ENCODE measurements at regions of chr15 and their contacts with region 1.

Region 1: GRCh38 chr15:55775316-55775715 is 32.4 kb upstream of the PRTG start:
- DNase-seq: no peak
- ATAC-seq: no peak
- H3K4me3 ChIP-seq: no peak overlapping the region
- H3K4me3 Mint-ChIP-seq: no peak overlapping the region
- H3K27ac ChIP-seq: no peak overlapping the region
- H3K27ac Mint-ChIP-seq: no peak overlapping the region
- H3K4me1 ChIP-seq: no peaks in the 10 kb centered on the region
- H3K4me1 Mint-ChIP-seq: peaks cover 0 to 1% (median 0%) of the 10 kb centered on the region in 7 donors
- H3K27me3 ChIP-seq: no peaks in the 10 kb centered on the region
- H3K27me3 Mint-ChIP-seq: peaks cover 26 to 34% (median 30%) of the 10 kb centered on the region in 5 donors

Region 2: DNA sequence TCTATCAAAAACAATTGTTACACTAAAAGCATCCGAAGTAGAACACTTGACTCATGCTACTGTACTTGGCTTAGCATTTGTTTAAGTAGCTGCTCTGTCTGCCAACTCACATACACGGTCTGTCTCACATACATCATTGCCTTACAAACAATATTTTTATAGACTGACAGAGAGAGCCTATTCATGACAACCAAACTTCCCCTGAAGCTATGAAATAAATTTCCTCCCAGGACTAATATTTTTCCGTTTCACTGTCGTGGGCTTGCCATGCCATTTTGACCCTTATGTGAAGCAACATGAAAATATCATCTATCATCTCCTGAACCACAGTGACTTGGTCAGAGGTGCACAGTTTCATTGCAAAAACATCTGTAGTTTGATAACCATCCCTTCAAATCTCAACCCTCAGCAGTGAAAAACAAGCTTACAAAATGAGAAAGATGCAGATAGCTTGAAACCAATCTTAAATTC is 120.7 kb before region 1 on chr15:
- CTCF ChIA-PET with region 1: no interaction called
- POLR2A ChIA-PET with region 1: no interaction called
- intact Hi-C with region 1: loop called in 1 of 2 experiments (anchors 10 kb)
- DNase-seq: no peak
- ATAC-seq: no peak
- H3K4me3 ChIP-seq: no peak overlapping the region
- H3K4me3 Mint-ChIP-seq: no peak overlapping the region
- H3K27ac ChIP-seq: no peak overlapping the region
- H3K27ac Mint-ChIP-seq: no peak overlapping the region
- H3K4me1 ChIP-seq: no peaks in the 10 kb centered on the region
- H3K4me1 Mint-ChIP-seq: no peaks in the 10 kb centered on the region
- H3K27me3 ChIP-seq: no peaks in the 10 kb centered on the region
- H3K27me3 Mint-ChIP-seq: peaks cover 0 to 16% (median 0%) of the 10 kb centered on the region in 5 donors

Region 3: DNA sequence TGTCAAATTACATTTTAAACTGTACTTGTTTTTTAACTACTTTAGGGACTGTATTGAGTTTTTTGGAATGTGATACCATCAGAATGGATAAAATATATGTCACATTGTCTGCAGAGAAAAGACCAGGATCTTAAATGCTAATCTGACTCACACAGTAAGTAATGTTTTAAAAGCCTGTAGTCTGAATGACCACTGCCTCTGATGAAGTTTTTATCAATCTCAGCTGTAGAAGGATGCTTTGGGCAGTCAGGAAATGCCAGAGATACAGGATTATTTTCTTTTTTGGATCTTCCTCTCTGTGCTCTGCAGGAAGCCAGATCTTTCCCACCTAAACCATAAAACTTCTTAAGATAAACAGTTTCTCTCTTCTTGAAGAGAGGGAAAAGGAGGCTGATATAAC is 40.7 kb after region 1 on chr15:
- CTCF ChIA-PET with region 1: no interaction called
- POLR2A ChIA-PET with region 1: no interaction called
- intact Hi-C with region 1: loop called in 1 of 2 experiments (anchors 1 kb)
- DNase-seq: no peak
- ATAC-seq: no peak
- H3K4me3 ChIP-seq: no peak overlapping the region
- H3K4me3 Mint-ChIP-seq: no peak overlapping the region
- H3K27ac ChIP-seq: no peak overlapping the region
- H3K27ac Mint-ChIP-seq: no peak overlapping the region
- H3K4me1 ChIP-seq: no peaks in the 10 kb centered on the region
- H3K4me1 Mint-ChIP-seq: peaks cover 0 to 2% (median 0%) of the 10 kb centered on the region in 7 donors
- H3K27me3 ChIP-seq: no peaks in the 10 kb centered on the region
- H3K27me3 Mint-ChIP-seq: peaks cover 0 to 8% (median 4%) of the 10 kb centered on the region in 5 donors